ENCODE measurements at regions of chrX and their contacts with region 1.

Region 1: GRCh38 chrX:118807151-118808017 is 16.2 kb upstream of the ZCCHC12 start:
- DNase-seq: peak; percentile 63
- H3K4me3 Mint-ChIP-seq: no peak overlapping the region
- H3K27ac Mint-ChIP-seq: no peak overlapping the region
- H3K4me1 Mint-ChIP-seq: no peaks in the 10 kb centered on the region
- H3K27me3 Mint-ChIP-seq: peaks cover 48% of the 10 kb centered on the region
- CTCF ChIP-seq: peak; percentile 76

Region 2: DNA sequence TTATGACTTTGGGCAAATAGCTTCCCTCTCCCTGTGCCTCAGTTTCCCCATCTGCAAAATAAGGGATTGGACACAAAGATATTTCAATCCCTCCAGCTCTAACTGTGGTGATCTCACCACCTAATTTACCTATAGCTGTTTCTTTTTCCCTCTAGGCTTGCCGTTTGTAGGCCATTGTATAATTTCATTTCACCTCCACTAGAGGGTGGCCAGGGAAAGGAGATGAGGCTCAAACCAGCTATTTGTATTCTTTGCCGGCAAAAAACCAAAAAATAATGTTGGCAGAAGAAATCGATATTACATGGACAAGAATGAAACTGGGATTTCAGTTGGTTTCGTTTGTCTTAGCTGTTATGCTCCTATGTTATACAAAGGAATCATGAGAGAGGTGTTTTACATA is 347.9 kb before region 1 on chrX:
- CTCF ChIA-PET with region 1: no interaction called
- POLR2A ChIA-PET with region 1: no interaction called
- intact Hi-C with region 1: loop called (anchors 1 kb)
- DNase-seq: peak; percentile 51
- H3K4me3 Mint-ChIP-seq: no peak overlapping the region
- H3K27ac Mint-ChIP-seq: no peak overlapping the region
- H3K4me1 Mint-ChIP-seq: no peaks in the 10 kb centered on the region
- H3K27me3 Mint-ChIP-seq: no peaks in the 10 kb centered on the region
- CTCF ChIP-seq: peak; percentile 46

Region 3: GRCh38 chrX:118627084-118627758 is 180.2 kb before region 1 on chrX:
- CTCF ChIA-PET with region 1: interaction called, 75 read pairs
- POLR2A ChIA-PET with region 1: no interaction called
- intact Hi-C with region 1: loop called (anchors 1 kb)
- DNase-seq: peak; percentile 51
- H3K4me3 Mint-ChIP-seq: no peak overlapping the region
- H3K27ac Mint-ChIP-seq: no peak overlapping the region
- H3K4me1 Mint-ChIP-seq: no peaks in the 10 kb centered on the region
- H3K27me3 Mint-ChIP-seq: no peaks in the 10 kb centered on the region
- CTCF ChIP-seq: peak; percentile 46

Region 4: DNA sequence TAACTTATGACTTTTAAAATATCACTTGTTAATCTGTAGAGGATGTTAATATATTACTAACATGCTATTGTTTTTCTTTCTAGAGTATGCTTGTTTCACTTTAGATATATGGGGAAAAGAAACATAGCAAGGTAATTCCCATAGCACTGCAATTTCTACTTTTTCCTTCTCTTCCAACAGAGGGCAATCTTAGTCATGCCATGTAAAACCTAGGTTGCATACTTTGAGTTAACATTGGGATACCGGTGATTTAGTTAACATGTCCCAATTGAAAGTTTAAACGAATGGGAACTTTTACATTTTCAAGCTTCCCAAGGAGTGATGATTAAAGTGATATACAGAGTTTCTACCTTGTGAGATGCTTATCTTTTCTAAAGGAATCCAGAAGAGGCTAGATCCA is 169.4 kb before region 1 on chrX:
- CTCF ChIA-PET with region 1: interaction called, 33 read pairs
- POLR2A ChIA-PET with region 1: no interaction called
- intact Hi-C with region 1: loop called (anchors 1 kb)
- DNase-seq: peak; percentile 30
- H3K4me3 Mint-ChIP-seq: no peak overlapping the region
- H3K27ac Mint-ChIP-seq: no peak overlapping the region
- H3K4me1 Mint-ChIP-seq: no peaks in the 10 kb centered on the region
- H3K27me3 Mint-ChIP-seq: peaks cover 27% of the 10 kb centered on the region
- CTCF ChIP-seq: no peak

Region 5: DNA sequence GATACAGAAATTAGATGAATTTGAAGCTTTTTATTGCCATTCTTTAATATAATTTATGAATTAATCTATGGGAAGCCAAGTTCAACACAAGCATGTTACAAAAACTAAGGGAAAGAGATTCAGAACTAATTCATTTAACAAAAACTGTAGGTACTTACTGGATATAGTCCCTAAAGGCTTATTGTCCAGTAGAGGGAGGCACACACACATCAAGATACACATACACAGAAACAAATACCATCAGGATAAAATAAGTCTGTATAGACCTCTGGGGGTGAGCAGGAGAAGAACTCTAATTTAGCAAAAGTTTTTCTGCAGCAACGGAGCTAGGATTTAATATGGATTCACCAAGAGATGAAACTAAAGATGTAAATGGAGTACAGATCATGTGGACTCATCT is 163.0 kb before region 1 on chrX:
- CTCF ChIA-PET with region 1: interaction called, 33 read pairs
- POLR2A ChIA-PET with region 1: interaction called, 3 read pairs
- intact Hi-C with region 1: loop called (anchors 1 kb)
- DNase-seq: peak; percentile 50
- H3K4me3 Mint-ChIP-seq: no peak overlapping the region
- H3K27ac Mint-ChIP-seq: no peak overlapping the region
- H3K4me1 Mint-ChIP-seq: no peaks in the 10 kb centered on the region
- H3K27me3 Mint-ChIP-seq: peaks cover 15% of the 10 kb centered on the region
- CTCF ChIP-seq: peak; percentile 47

Region 6: GRCh38 chrX:118795528-118796280 is 11.7 kb before region 1 on chrX:
- CTCF ChIA-PET with region 1: interaction called, 11 read pairs
- POLR2A ChIA-PET with region 1: no interaction called
- intact Hi-C with region 1: no loop called
- DNase-seq: no peak
- H3K4me3 Mint-ChIP-seq: no peak overlapping the region
- H3K27ac Mint-ChIP-seq: no peak overlapping the region
- H3K4me1 Mint-ChIP-seq: no peaks in the 10 kb centered on the region
- H3K27me3 Mint-ChIP-seq: peaks cover 18% of the 10 kb centered on the region
- CTCF ChIP-seq: no peak

Measured in MCF 10A (cell line).